ENCODE measurements at regions of chr3 and their contacts with region 1.

Region 1: GRCh38 chr3:185767002-185767688 is 57.7 kb downstream of the IGF2BP2 start:
- DNase-seq: no peak
- H3K4me3 ChIP-seq: no peak overlapping the region
- H3K27ac ChIP-seq: no peak overlapping the region
- H3K4me1 ChIP-seq: no peaks in the 10 kb centered on the region
- H3K27me3 ChIP-seq: peaks cover 3% of the 10 kb centered on the region
- CTCF ChIP-seq: no peak
- POLR2A ChIP-seq: no peak

Region 2: DNA sequence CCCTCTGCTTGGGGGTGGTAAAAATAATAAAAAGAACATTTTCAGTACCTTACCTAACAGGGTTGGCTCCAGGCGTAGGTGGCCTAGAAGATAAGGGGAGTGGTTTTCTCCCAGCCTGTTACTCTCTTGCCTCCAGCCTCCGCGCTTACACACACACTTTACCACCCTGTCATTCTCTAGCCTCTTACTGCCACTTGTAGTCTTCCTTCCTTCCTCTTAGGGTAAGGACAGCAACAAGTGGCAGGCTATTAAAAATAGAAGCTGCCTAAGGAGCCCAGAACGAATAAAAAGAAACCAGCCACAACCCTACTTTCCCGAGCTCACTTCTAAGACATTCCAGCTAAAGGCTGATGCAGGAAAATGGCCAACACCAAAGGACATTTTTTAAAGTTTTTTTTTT is 205.2 kb before region 1 on chr3:
- intact Hi-C with region 1: no loop called
- DNase-seq: no peak
- H3K4me3 ChIP-seq: no peak overlapping the region
- H3K27ac ChIP-seq: peak overlapping the region; percentile 47 to 49
- H3K4me1 ChIP-seq: no peaks in the 10 kb centered on the region
- H3K27me3 ChIP-seq: no peaks in the 10 kb centered on the region
- CTCF ChIP-seq: no peak
- POLR2A ChIP-seq: no peak

Region 3: GRCh38 chr3:185659942-185660921 is 106.9 kb before region 1 on chr3:
- intact Hi-C with region 1: loop called (anchors 5 kb)
- DNase-seq: peak; percentile 71
- H3K4me3 ChIP-seq: no peak overlapping the region
- H3K27ac ChIP-seq: peak overlapping the region in 1 of 2 donors; percentile 42
- H3K4me1 ChIP-seq: no peaks in the 10 kb centered on the region
- H3K27me3 ChIP-seq: no peaks in the 10 kb centered on the region
- CTCF ChIP-seq: peak; percentile 79 to 92 (median 88)
- POLR2A ChIP-seq: no peak

Region 4: GRCh38 chr3:185702262-185703225 is 64.6 kb before region 1 on chr3:
- intact Hi-C with region 1: no loop called
- DNase-seq: no peak
- H3K4me3 ChIP-seq: no peak overlapping the region
- H3K27ac ChIP-seq: no peak overlapping the region
- H3K4me1 ChIP-seq: no peaks in the 10 kb centered on the region
- H3K27me3 ChIP-seq: no peaks in the 10 kb centered on the region
- CTCF ChIP-seq: no peak
- POLR2A ChIP-seq: no peak